Left cardiac atrium (tissue), 4 donors: ENCODE measurements at regions of chr19 and their contacts with region 1.

Region 1: DNA sequence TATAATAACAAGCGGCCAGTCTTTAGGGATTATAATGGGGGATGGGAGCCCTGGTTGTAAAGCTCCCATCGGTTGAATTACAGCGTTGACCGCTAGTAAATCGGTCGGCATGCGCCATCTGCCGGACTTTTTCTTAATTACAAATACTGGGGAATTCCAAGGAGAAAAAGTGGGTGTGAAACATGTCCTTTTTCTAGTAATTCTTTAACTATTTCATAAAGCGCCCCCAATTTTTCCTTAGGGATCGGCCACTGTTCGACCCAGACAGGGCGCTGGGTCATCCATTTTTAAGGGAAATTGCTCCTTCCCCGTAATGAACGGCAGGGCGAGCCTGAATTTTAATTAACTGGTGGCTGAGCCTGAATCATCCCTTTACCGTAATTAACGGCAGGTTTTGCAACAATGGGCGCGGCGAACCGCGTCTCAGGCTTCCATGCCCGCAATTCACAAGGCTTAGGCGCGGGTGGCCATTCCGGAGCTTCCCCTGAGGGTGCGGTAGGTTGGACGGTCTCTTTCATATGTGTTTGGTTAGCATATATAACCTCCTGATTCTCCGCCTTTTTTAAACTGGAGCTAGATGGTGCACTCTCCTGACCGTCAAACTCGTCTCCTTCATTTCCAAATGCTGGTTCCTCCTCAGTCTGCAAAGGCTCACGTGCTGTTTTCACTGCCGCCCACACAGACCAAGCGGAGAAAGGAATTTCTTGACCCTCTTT is 30.2 kb upstream of the EVI5L start:
- DNase-seq: peak; percentile 63
- ATAC-seq: peak; percentile 70 to 93

Region 2: GRCh38 chr19:7104747-7105447 is 694.9 kb before region 1 on chr19:
- intact Hi-C with region 1: loop called in 1 of 2 experiments (anchors 10 kb)
- DNase-seq: no peak
- ATAC-seq: peak in 1 of 2 donors; percentile 21

Region 3: DNA sequence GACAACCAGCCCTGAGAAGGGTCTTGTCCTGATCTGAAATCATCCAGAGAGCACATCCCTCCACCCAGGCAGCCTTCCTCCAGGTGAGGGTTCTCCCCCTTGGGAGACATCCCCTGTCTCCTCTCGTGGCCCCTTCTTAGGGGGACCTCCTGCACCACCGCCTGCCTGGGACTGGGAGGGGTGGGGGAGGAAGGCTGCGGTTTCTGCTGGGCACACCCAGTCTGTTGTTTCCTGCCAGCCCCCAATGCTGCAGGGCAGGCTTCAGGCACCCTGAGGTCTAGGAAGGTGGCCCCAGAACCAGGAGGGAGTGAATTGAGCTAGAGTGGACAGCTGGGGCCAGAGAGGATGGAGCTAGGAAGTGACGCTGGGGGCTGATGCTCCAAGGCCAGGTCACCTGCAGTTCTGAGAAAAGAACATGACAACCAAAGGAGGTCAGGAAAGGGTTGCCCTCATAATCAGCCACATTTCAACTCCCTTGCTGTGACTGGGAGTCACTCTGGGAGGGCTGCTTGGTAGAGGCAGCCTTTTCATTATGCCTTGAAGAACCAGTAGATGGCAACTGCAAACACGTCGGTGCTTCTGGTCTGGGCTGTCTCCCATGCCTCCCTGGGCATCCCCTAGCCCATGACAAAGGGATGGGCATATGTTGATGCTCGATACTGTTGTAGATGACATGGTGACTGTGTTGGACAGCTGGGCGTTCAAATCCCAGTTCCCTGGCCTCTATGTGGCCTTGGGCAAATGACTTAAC is 449.7 kb before region 1 on chr19:
- intact Hi-C with region 1: loop called (anchors 5 to 10 kb)
- DNase-seq: no peak
- ATAC-seq: no peak

Region 4: DNA sequence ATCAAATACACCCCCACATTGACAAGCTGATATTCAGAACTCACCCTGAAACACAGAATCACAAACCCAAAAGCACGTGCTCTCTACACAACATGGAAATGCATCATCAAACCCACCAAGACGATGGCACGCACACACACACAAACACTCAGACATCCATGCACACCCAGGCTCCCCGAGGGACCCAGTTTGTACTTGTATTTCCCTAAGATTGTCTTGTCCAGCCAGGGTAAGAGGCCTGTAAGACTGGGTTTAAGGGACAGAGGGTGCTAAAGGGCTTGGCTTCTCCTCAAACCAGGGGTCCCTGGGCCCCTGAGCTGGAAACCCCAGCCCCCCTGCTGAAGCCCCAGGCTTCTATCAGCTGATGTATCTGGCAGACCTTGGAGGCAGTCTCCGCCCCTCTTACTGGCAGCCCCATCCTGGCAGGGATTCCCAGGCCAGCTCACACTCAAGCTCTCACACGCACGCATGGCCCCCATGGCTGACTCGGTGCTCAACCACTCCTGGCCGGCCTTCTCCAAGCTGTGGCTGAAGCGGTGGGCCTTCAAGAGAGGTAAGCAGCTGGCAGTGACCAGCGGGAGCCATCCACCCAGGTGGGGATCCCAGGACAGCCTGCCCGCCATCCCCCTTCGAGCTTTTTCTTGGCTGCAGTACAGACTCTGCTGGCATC is 444.5 kb before region 1 on chr19:
- intact Hi-C with region 1: loop called (anchors 5 to 10 kb)
- DNase-seq: no peak
- ATAC-seq: no peak

Region 5: GRCh38 chr19:7562646-7563393 is 237.0 kb before region 1 on chr19:
- intact Hi-C with region 1: loop called (anchors 5 to 10 kb)
- DNase-seq: no peak
- ATAC-seq: no peak

Region 6: GRCh38 chr19:7652061-7652641 is 147.6 kb before region 1 on chr19:
- intact Hi-C with region 1: loop called (anchors 10 kb)
- DNase-seq: peak; percentile 80
- ATAC-seq: peak; percentile 83 to 87

Region 7: DNA sequence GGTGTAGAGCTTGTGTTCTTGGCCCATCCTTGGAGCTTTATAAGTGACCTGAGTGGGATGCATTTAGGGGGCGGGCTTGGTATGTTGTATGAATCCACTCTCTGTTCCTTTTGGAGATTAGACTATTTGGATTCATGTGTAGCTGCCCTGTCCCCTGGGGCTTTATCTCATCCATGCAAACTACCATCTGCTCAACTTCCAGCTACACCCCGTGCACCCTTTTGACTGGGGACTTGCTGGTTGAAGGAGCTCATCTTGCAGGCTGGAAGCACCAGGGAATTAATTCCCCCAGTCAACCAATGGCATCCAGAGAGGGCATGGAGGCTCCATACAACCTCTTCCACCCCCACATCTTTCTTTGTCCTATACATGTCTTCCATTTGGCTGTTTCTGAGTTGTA is 30.6 kb before region 1 on chr19:
- intact Hi-C with region 1: no loop called
- DNase-seq: no peak
- ATAC-seq: no peak